ENCODE measurements at regions of chr10 and their contacts with region 1.

Region 1: DNA sequence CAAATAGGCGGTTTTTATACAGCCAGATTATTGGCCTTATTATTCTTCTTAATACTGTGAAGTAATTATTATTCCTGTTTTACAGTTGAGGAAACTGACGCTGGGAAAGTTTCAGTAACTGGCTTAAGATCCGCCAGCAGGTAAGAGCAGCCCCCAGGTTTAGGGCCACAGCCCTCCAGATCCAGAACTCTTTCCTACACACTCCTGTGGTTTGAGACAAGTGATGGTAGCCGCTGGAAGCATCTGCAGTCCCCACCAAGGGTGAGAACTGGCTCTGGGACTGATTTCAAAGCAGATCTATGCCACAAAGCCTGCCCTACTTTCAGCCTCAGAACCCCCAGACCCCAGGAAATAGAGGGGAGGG is 3.0 kb upstream of the UNC5B start:
- DNase-seq: no peak
- H3K4me3 ChIP-seq: no peak overlapping the region
- H3K4me1 ChIP-seq: peaks cover 4% of the 10 kb centered on the region; the same call in 1 of the 2 replicates
- H3K27me3 ChIP-seq: peaks cover 24% of the 10 kb centered on the region

Region 2: GRCh38 chr10:70920565-70920964 is 288.8 kb before region 1 on chr10:
- in situ Hi-C with region 1: loop called (anchors 5 kb)
- DNase-seq: no peak
- H3K4me3 ChIP-seq: no peak overlapping the region
- H3K4me1 ChIP-seq: no peaks in the 10 kb centered on the region
- H3K27me3 ChIP-seq: peaks cover 19% of the 10 kb centered on the region

Measured in HAP-1 (cell line).